ENCODE measurements at regions of chr22 and their contacts with region 1.

Region 1: DNA sequence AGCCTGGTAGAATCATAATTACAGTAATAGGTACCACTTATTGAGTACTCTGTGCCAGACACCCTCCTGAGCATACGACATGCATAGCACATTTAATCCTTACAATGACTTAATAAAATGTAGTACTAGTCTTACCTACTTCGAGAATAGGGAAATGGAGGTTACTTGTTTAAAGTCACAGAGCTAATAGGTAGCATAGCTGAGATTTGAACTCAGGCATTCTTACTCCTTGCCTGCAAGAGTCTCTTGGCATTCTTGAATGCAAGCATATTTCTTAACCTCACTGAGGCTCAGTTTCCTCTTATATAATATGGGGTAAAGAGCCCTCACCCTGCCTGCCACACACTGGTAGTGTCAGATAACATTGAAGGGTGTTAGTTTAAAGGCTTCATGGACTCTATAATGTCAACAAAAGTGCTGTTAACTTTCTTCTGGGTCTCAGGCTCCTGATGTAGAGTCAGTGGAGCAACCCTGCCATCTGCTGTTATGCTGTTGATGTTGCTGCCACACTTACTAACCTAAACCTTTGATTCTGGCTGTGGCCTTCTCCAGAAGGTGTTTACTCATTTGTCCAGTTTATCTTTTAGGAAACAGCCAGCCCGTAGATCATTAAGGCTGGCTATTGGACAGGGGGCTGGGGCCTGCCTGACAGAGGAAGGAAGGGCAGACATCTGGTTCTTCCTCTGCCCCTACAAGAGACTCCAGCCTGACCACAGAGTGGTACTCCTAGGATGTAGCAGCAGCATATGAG is 18.9 kb downstream of the LIMK2 start:
- DNase-seq: no peak
- ATAC-seq: peak; percentile 81
- H3K4me3 ChIP-seq: no peak overlapping the region
- H3K27ac ChIP-seq: peak overlapping the region; percentile 49
- H3K4me1 ChIP-seq: peaks cover 25% of the 10 kb centered on the region
- H3K27me3 ChIP-seq: no peaks in the 10 kb centered on the region
- CTCF ChIP-seq: peak; percentile 67 to 83 (median 77)
- EP300 ChIP-seq: peak in 1 of 2 experiments; percentile 5; a peak in 1 of 4 replicates
- POLR2A ChIP-seq: no peak
- RAD21 ChIP-seq: peak; percentile 89

Region 2: GRCh38 chr22:30947816-30948454 is 283.1 kb before region 1 on chr22:
- CTCF ChIA-PET with region 1: interaction called, 4 read pairs
- POLR2A ChIA-PET with region 1: interaction called, 4 read pairs
- RAD21 ChIA-PET with region 1: no interaction called
- SMC1A ChIA-PET with region 1: interaction called, 3 read pairs
- in situ Hi-C with region 1: no loop called
- intact Hi-C with region 1: loop called (anchors 10 kb)
- DNase-seq: no peak
- ATAC-seq: 0 out of 3 replicates have a peak, but pooled peaks have one; percentile 31
- H3K4me3 ChIP-seq: no peak overlapping the region
- H3K27ac ChIP-seq: no peak overlapping the region
- H3K4me1 ChIP-seq: no peaks in the 10 kb centered on the region
- H3K27me3 ChIP-seq: no peaks in the 10 kb centered on the region
- CTCF ChIP-seq: peak; percentile 23 to 50 (median 38); a peak in 4 of 6 replicates
- EP300 ChIP-seq: no peak
- POLR2A ChIP-seq: no peak
- RAD21 ChIP-seq: peak; percentile 49

Region 3: GRCh38 chr22:31107178-31107893 is 123.7 kb before region 1 on chr22 and contains the start of gene SELENOM:
- CTCF ChIA-PET with region 1: interaction called, 19 read pairs
- POLR2A ChIA-PET with region 1: interaction called, 3 read pairs
- RAD21 ChIA-PET with region 1: interaction called, 3 read pairs
- SMC1A ChIA-PET with region 1: interaction called, 5 read pairs
- in situ Hi-C with region 1: no loop called
- intact Hi-C with region 1: loop called (anchors 2 kb)
- DNase-seq: peak; percentile 53
- ATAC-seq: peak; percentile 94
- H3K4me3 ChIP-seq: peak within 1 kb of the TSS; percentile 54
- H3K27ac ChIP-seq: no peak within 1 kb of the TSS
- H3K4me1 ChIP-seq: no peaks in the 10 kb centered on the region; the same call in 1 of the 2 replicates
- H3K27me3 ChIP-seq: no peaks in the 10 kb centered on the region
- CTCF ChIP-seq: peak; percentile 89 to 91 (median 90)
- EP300 ChIP-seq: no peak
- POLR2A ChIP-seq: peak; percentile 72
- RAD21 ChIP-seq: peak; percentile 58
- polyA plus RNA-seq, gene SELENOM: 0.80 to 1.3 TPM

Region 4: DNA sequence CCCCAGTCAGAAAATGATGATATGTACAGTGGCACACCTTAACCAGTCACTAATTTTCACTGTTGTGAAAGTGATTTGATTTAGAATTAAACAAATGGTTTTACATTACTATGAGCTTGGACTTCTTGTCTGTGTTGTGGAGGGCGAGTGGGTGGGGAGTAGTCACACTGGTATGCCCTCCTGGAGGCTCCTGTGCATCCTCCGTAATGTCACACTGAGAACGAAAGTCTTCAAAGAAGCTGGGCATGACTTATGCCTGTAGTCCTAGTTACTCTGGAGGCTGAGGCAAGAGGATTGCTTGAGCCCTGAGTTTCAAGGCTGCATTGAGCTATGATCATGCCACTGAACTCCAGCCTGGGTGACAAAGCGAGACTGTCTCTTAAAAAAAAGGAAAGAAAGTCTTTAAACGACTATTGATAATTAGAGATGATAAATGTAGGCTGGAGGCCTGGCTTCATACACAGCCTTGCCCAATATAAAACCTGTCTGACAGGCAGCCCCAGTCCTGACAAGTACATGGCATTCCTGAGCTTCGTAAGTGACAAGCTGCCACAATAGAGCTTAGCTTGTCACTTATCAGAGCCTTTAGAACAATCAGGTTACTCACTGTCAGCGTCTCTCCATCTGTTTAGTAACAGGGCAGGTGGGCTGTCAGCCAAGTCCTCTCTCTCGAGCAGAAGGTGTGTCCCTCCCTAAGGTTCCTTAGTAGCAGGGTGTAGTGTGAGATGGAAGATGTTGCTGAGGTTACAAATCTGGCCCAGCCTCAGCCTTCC is 24.0 kb before region 1 on chr22:
- CTCF ChIA-PET with region 1: interaction called, 244 read pairs
- POLR2A ChIA-PET with region 1: interaction called, 21 read pairs
- RAD21 ChIA-PET with region 1: interaction called, 100 read pairs
- SMC1A ChIA-PET with region 1: interaction called, 260 read pairs
- in situ Hi-C with region 1: no loop called
- intact Hi-C with region 1: loop called (anchors 2 kb)
- DNase-seq: no peak
- ATAC-seq: no peak
- H3K4me3 ChIP-seq: no peak overlapping the region
- H3K27ac ChIP-seq: no peak overlapping the region
- H3K4me1 ChIP-seq: peaks cover 4% of the 10 kb centered on the region
- H3K27me3 ChIP-seq: no peaks in the 10 kb centered on the region
- CTCF ChIP-seq: no peak
- EP300 ChIP-seq: no peak
- POLR2A ChIP-seq: no peak
- RAD21 ChIP-seq: no peak

Region 5: GRCh38 chr22:31218565-31219262 is 12.3 kb before region 1 on chr22:
- CTCF ChIA-PET with region 1: interaction called, 244 read pairs
- POLR2A ChIA-PET with region 1: interaction called, 12 read pairs
- RAD21 ChIA-PET with region 1: interaction called, 100 read pairs
- SMC1A ChIA-PET with region 1: interaction called, 260 read pairs
- in situ Hi-C with region 1: no loop called
- intact Hi-C with region 1: loop called (anchors 2 kb)
- DNase-seq: no peak
- ATAC-seq: peak; percentile 22; the same call in 1 of the 3 replicates
- H3K4me3 ChIP-seq: peak overlapping the region; percentile 23; the same call in 1 of the 2 replicates
- H3K27ac ChIP-seq: peak overlapping the region; percentile 75
- H3K4me1 ChIP-seq: peaks cover 44% of the 10 kb centered on the region
- H3K27me3 ChIP-seq: no peaks in the 10 kb centered on the region
- CTCF ChIP-seq: no peak
- EP300 ChIP-seq: no peak
- POLR2A ChIP-seq: no peak
- RAD21 ChIP-seq: no peak

Measured in GM12878 (cell line).